ENCODE measurements at regions of chr22 and their contacts with region 1.

Region 1: DNA sequence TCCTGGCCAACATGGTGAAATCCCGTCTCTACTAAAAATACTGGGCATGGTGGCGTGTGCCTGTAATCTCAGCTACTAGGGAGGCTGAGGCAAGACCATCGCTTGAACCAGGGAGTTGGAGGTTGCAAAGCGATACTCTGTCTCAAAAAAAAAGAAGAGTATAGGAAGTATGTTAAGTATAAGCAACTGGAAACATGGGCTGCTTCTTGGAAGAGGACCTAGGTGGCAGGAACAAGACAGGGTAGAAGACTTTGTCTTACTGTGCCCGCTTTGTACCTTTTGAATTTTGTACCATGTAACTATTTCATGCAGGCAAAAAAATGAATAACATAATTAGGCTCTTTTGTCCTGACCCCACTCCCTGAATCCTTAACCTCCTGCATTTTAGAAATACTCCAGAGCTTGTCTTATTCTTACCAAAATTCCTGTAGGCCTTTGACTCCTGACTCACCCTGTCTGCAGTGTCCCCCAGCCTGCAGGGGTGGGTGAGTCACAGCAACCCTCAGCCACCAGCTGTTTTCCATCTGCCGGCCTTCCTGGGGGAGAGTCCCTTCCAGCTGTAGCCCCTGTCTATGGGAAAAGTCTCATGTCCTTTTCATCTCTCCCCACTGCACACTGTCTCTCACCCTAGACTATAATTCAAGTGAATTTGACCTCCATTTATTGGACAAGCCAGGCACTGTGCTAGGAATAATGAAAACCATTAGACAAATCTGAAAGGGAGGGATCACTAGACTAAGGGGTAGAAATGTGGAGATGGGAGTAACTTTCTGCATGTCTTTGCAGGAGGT is 41.8 kb downstream of the TXN2 start:
- DNase-seq: peak in 1 of 6 donors; percentile 69
- ATAC-seq: peak; percentile 36 to 70 (median 38)
- H3K4me3 ChIP-seq: no peak overlapping the region
- H3K27ac ChIP-seq: no peak overlapping the region
- H3K4me1 ChIP-seq: peaks cover 15 to 40% (median 17%) of the 10 kb centered on the region in 3 donors
- H3K27me3 ChIP-seq: no peaks in the 10 kb centered on the region
- CTCF ChIP-seq: no peak

Region 2: DNA sequence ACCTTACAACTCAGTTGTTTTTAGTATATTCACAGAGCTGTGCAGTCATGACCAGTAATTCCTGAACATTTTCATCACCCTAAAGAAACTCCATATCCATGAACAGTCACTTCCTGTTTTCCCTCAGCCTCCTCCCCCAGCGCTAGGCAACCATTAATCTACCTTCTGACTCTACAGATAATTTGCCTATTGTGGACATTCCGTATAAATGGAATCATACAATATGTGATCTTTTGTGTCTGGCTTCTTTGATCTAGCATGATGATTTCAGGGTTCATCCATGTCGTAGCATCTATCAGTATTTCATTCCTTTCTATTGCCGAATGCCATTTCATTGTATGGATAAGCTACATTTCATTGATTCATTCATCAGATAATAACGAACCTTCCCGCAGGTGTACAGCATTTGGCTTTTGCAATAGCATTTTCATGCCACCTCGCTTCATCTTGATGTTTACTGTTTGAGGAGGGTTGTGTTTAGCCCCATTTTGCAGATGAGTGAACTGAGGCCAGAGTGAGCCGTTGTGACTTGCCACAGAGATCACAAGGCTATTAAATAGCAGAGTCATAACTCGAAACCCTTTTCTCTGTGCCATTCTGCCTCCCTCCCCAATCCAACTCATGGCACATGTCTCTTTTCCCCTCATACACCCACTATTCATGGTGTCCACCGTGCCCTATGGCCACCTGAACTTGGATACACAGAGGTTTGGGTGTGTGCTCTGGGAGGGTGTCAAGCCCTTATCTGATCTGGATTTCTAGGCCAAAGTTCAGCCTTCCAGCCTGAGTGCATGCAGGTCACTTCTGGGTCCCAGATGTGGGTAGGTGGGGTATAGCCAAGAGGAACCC is 40.8 kb before region 1 on chr22:
- intact Hi-C with region 1: loop called in 1 of 3 experiments (anchors 10 kb)
- DNase-seq: no peak
- ATAC-seq: peak in 2 of 4 donors; percentile 40 to 45
- H3K4me3 ChIP-seq: no peak overlapping the region
- H3K27ac ChIP-seq: no peak overlapping the region
- H3K4me1 ChIP-seq: peaks cover 0 to 5% (median 0%) of the 10 kb centered on the region in 3 donors
- H3K27me3 ChIP-seq: no peaks in the 10 kb centered on the region
- CTCF ChIP-seq: no peak

Region 3: GRCh38 chr22:36619797-36620399 is 180.2 kb after region 1 on chr22:
- intact Hi-C with region 1: no loop called
- DNase-seq: no peak
- ATAC-seq: no peak
- H3K4me3 ChIP-seq: no peak overlapping the region
- H3K27ac ChIP-seq: no peak overlapping the region
- H3K4me1 ChIP-seq: peaks cover 6 to 27% (median 22%) of the 10 kb centered on the region in 3 donors
- H3K27me3 ChIP-seq: no peaks in the 10 kb centered on the region
- CTCF ChIP-seq: no peak